Ascending aorta (tissue), 2 donors: ENCODE measurements at regions of chr1 and their contacts with region 1.

Region 1: GRCh38 chr1:231357831-231358354 is 19.8 kb downstream of the SPRTN start:
- DNase-seq: peak in 1 of 2 donors; percentile 70
- H3K4me3 ChIP-seq: no peak overlapping the region
- H3K27ac ChIP-seq: peak overlapping the region in 1 of 2 donors; percentile 31
- H3K4me1 ChIP-seq: peaks cover 0 to 2% of the 10 kb centered on the region in 2 donors
- H3K27me3 ChIP-seq: no peaks in the 10 kb centered on the region
- CTCF ChIP-seq: peak; percentile 63 to 76 (median 71)

Region 2: GRCh38 chr1:231603598-231604275 is 245.8 kb after region 1 on chr1:
- intact Hi-C with region 1: loop called (anchors 1 kb)
- DNase-seq: no peak
- H3K4me3 ChIP-seq: peak overlapping the region; percentile 59 to 63
- H3K27ac ChIP-seq: no peak overlapping the region
- H3K4me1 ChIP-seq: peaks cover 0 to 3% of the 10 kb centered on the region in 2 donors
- H3K27me3 ChIP-seq: no peaks in the 10 kb centered on the region
- CTCF ChIP-seq: peak; percentile 54 to 76 (median 56)